CD4-positive, alpha-beta T cell (primary cell): ENCODE measurements at regions of chr18 and their contacts with region 1.

Region 1: DNA sequence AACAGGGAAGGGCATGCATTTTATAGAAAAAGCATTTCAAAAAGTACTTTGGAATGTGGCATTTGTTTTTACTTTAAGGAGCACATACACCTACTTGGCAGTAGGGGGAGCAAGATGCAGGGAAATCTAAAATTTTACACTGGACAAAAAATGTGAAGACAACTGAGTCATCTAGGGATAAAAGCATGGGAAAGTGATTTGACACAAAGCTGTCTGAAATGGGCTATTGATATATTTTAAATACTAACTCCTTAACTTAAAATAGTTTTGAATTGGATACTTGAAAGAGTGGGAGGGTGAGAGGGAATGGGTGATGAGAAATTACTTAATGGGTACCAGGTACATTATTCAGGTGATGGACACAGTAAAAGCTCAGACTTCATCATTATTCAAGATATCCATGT is 15.8 kb downstream of the TMEM200C start:
- DNase-seq: no peak
- ATAC-seq: no peak
- H3K4me3 ChIP-seq: no peak overlapping the region
- H3K4me3 Mint-ChIP-seq: no peak overlapping the region
- H3K27ac ChIP-seq: no peak overlapping the region
- H3K27ac Mint-ChIP-seq: no peak overlapping the region
- H3K4me1 ChIP-seq: no peaks in the 10 kb centered on the region
- H3K4me1 Mint-ChIP-seq: no peaks in the 10 kb centered on the region
- H3K27me3 ChIP-seq: no peaks in the 10 kb centered on the region
- H3K27me3 Mint-ChIP-seq: peaks cover 26% of the 10 kb centered on the region
- CTCF ChIP-seq: peak; percentile 65

Region 2: GRCh38 chr18:5851998-5852397 is 27.5 kb before region 1 on chr18:
- CTCF ChIA-PET with region 1: no interaction called
- POLR2A ChIA-PET with region 1: no interaction called
- intact Hi-C with region 1: loop called in 1 of 2 experiments (anchors 1 kb)
- DNase-seq: no peak
- ATAC-seq: no peak
- H3K4me3 ChIP-seq: no peak overlapping the region
- H3K4me3 Mint-ChIP-seq: no peak overlapping the region
- H3K27ac ChIP-seq: no peak overlapping the region
- H3K27ac Mint-ChIP-seq: no peak overlapping the region
- H3K4me1 ChIP-seq: no peaks in the 10 kb centered on the region
- H3K4me1 Mint-ChIP-seq: no peaks in the 10 kb centered on the region
- H3K27me3 ChIP-seq: no peaks in the 10 kb centered on the region
- H3K27me3 Mint-ChIP-seq: peaks cover 40% of the 10 kb centered on the region
- CTCF ChIP-seq: no peak

Region 3: DNA sequence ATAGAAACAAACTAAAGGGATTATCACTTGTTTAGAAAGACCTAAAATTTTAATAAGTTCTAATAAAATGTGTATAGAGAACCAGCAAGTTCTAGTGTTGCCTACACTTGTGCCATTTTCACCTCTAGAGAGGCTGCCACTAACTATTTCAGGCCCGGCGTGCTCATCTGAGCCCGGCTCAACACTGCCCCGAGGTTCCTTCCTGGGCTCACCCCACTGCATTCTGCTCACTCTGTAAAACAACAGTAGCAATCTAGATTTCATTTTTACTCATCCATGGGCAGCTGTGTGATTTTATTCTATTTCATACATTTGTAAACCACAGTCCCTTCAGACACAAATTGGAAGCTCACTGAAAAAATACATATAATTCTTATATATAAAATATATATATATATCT is 282.1 kb after region 1 on chr18:
- CTCF ChIA-PET with region 1: no interaction called
- POLR2A ChIA-PET with region 1: no interaction called
- intact Hi-C with region 1: no loop called
- DNase-seq: no peak
- ATAC-seq: no peak
- H3K4me3 ChIP-seq: no peak overlapping the region
- H3K4me3 Mint-ChIP-seq: no peak overlapping the region
- H3K27ac ChIP-seq: no peak overlapping the region
- H3K27ac Mint-ChIP-seq: no peak overlapping the region
- H3K4me1 ChIP-seq: no peaks in the 10 kb centered on the region
- H3K4me1 Mint-ChIP-seq: no peaks in the 10 kb centered on the region
- H3K27me3 ChIP-seq: no peaks in the 10 kb centered on the region
- H3K27me3 Mint-ChIP-seq: no peaks in the 10 kb centered on the region
- CTCF ChIP-seq: no peak